ENCODE measurements at regions of chr4 and their contacts with region 1.

Region 1: DNA sequence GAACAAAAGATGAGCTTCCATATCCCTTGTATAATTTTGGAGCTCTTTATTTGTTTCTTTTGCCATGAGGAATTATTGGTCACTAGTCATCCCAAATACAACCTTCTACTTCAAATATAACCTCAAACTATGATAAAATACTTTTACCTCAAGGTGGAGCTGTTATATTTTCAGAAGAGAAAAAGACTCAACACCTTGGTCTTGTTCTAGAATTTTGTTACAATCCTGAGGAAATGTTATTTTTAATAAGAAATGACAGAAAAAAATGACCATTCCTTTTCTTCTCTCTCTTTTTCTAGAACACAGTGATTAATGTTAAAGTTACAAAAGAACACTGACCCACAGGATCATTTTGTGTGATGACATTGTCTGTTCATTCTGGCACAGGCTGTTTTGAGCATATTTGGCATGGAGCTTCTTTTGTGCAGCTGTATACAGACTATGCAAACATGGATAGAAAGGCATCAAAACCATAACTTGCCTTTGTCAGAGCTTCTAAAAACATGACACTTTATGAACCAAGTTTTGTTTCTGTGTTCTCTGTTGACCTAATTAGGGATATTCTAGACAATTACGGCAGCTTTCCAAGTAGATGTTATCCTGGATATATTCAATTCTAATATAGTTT is 159.6 kb upstream of the CTSO start:
- DNase-seq: peak; percentile 8
- ATAC-seq: no peak
- H3K4me3 ChIP-seq: no peak overlapping the region
- H3K27ac ChIP-seq: no peak overlapping the region
- H3K4me1 ChIP-seq: no peaks in the 10 kb centered on the region
- H3K27me3 ChIP-seq: no peaks in the 10 kb centered on the region
- CTCF ChIP-seq: no peak; the same call in 1 of the 2 replicates

Region 2: GRCh38 chr4:156677131-156677531 is 563.9 kb after region 1 on chr4:
- CTCF ChIA-PET with region 1: no interaction called
- POLR2A ChIA-PET with region 1: no interaction called
- in situ Hi-C with region 1: no loop called
- intact Hi-C with region 1: no loop called
- DNase-seq: peak; percentile 28
- ATAC-seq: peak; percentile 70; the same call in 1 of the 2 replicates
- H3K4me3 ChIP-seq: no peak overlapping the region
- H3K27ac ChIP-seq: no peak overlapping the region
- H3K4me1 ChIP-seq: no peaks in the 10 kb centered on the region
- H3K27me3 ChIP-seq: no peaks in the 10 kb centered on the region
- CTCF ChIP-seq: peak; percentile 58

Region 3: DNA sequence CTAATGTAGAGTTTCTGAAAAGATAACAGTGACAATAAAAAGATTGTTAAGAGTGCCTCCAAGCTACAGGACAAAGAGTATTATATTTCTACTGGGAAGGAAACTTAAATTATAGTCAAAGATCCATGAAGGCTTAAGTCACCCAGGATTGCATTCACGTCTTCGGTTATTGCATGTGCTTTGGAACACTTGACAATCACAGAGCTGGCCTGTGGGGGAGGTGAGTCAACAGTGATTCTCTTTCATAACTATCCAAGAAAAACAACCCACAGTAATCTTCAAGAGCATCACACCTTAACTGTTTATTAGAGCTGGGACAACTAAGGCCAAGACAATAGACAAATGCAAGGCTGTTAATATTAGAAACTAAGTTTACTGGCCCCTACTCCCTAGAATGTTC is 818.0 kb after region 1 on chr4:
- CTCF ChIA-PET with region 1: no interaction called
- POLR2A ChIA-PET with region 1: interaction called, 14 read pairs
- in situ Hi-C with region 1: no loop called
- intact Hi-C with region 1: no loop called
- DNase-seq: no peak
- ATAC-seq: peak; percentile 75
- H3K4me3 ChIP-seq: no peak overlapping the region
- H3K27ac ChIP-seq: peak overlapping the region; percentile 79
- H3K4me1 ChIP-seq: peaks cover 3% of the 10 kb centered on the region
- H3K27me3 ChIP-seq: no peaks in the 10 kb centered on the region
- CTCF ChIP-seq: no peak